Naive thymus-derived CD4-positive, alpha-beta T cell (primary cell): ENCODE measurements at regions of chr11 and their contacts with region 1.

Region 1: GRCh38 chr11:134275534-134276395 is at the start of gene GLB1L3:
- DNase-seq: peak; percentile 58 to 81 (median 79)
- ATAC-seq: peak; percentile 94
- H3K4me3 ChIP-seq: peak within 1 kb of the TSS; percentile 93
- H3K4me3 Mint-ChIP-seq: peak within 1 kb of the TSS; percentile 90 to 99 (median 95)
- H3K27ac ChIP-seq: peak within 1 kb of the TSS; percentile 69
- H3K27ac Mint-ChIP-seq: peak within 1 kb of the TSS; percentile 66 to 94 (median 92)
- H3K4me1 ChIP-seq: peaks cover 21 to 31% of the 10 kb centered on the region in 2 donors
- H3K4me1 Mint-ChIP-seq: peaks cover 26 to 54% (median 50%) of the 10 kb centered on the region in 7 donors
- H3K27me3 ChIP-seq: no peaks in the 10 kb centered on the region
- H3K27me3 Mint-ChIP-seq: peaks cover 0 to 11% (median 4%) of the 10 kb centered on the region in 5 donors
- total RNA-seq, gene GLB1L3: 1.0 to 11.4 (median 2.5) TPM

Region 2: DNA sequence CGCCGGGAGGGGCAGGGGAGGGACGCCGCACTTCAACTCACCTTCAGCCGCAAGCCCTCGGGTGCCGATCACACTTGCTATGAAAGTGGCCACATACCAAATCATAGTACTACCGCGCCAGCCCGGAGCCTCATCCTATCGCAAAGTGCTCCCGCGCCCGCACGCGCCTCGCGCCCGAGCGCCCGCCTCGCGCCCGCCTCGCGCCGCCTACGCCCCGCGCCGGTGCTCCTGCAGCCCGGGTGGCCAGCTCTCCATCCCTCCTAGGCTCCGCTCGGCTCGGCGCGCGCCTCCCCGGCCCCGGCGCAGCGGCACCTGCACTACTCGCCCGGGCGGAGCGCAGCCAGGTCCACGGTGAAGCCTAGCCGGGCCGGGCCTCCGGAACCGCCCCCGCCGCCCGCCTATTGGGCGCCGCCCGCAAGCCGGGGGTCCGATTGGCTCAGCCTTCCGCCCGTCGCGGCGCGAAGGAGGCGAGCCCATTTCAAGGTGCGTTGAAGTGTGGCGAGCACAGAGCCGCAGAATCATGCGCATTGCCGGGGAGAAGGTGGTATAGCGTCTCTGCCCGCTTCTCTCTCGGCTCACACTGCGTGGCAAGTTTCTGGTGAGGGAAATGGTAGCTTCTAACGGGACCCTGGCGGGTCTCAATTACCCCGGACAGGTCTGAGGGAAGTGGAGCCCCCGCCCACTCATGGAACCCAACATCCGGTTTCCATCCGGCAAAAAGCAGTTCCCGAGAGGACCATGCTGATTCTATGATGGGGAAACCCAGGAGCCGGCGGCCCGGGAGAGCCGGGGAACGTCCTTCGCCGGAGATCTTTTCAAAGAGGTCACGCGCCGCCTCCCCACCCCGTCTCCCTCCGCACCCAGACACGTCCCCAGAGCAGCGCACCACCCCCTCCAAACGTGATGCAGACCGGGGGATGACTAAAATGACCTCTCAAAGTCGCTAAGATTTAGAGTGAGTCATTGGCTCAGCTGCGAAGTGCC is 318.8 kb before region 1 on chr11 and contains the start of gene IGSF9B:
- CTCF ChIA-PET with region 1: no interaction called
- POLR2A ChIA-PET with region 1: interaction called, 3 read pairs
- intact Hi-C with region 1: loop called in 1 of 2 experiments (anchors 5 kb)
- DNase-seq: peak; percentile 87 to 97 (median 92)
- ATAC-seq: peak; percentile 97
- H3K4me3 ChIP-seq: peak within 1 kb of the TSS; percentile 99
- H3K4me3 Mint-ChIP-seq: peak within 1 kb of the TSS; percentile 89 to 96 (median 92)
- H3K27ac ChIP-seq: peak within 1 kb of the TSS; percentile 75
- H3K27ac Mint-ChIP-seq: peak within 1 kb of the TSS; percentile 48 to 91 (median 88)
- H3K4me1 ChIP-seq: peaks cover 11 to 27% of the 10 kb centered on the region in 2 donors
- H3K4me1 Mint-ChIP-seq: peaks cover 29 to 52% (median 43%) of the 10 kb centered on the region in 7 donors
- H3K27me3 ChIP-seq: no peaks in the 10 kb centered on the region
- H3K27me3 Mint-ChIP-seq: peaks cover 7 to 24% (median 16%) of the 10 kb centered on the region in 5 donors
- total RNA-seq, gene IGSF9B: 17.6 to 155 (median 24.1) TPM

Region 3: DNA sequence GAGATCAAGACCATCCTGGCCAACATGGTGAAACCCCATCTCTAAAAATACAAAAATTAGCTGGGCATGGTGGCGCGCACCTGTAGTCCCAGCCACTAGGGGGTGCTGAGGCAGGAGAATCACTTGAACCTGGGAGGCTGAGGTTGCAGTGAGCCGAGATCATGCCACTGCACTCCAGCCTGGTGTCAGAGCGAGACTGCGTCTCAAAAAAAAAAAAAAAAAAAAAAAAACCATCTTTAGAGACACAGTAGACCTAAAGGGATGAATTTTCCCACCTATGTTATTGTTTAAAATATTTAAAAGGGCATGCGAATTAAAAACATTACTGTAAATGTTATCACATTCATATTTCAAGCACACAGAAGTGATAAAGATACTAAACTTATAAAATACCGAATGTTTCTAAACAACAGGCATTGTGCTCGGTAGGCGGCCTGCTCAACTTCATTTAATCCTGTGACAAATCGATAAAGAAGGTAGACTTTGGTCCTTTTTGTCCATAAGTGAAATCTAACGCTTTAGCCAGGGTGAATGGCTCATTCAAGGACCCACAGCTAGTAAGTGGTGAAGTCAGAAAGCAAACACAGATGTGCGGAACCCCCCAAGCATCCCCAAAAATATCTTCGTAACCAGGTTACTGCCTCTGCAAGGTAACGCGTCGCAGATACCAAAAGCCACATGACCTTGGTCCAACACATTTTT is 68.1 kb before region 1 on chr11:
- CTCF ChIA-PET with region 1: interaction called, 4 read pairs
- POLR2A ChIA-PET with region 1: no interaction called
- intact Hi-C with region 1: loop called in 1 of 2 experiments (anchors 1 kb)
- DNase-seq: peak; percentile 36 to 67 (median 62)
- ATAC-seq: no peak
- H3K4me3 ChIP-seq: no peak overlapping the region
- H3K4me3 Mint-ChIP-seq: peak overlapping the region in 1 of 10 donors; percentile 34
- H3K27ac ChIP-seq: no peak overlapping the region
- H3K27ac Mint-ChIP-seq: no peak overlapping the region
- H3K4me1 ChIP-seq: no peaks in the 10 kb centered on the region
- H3K4me1 Mint-ChIP-seq: peaks cover 2 to 14% (median 7%) of the 10 kb centered on the region in 7 donors
- H3K27me3 ChIP-seq: no peaks in the 10 kb centered on the region
- H3K27me3 Mint-ChIP-seq: no peaks in the 10 kb centered on the region

Region 4: DNA sequence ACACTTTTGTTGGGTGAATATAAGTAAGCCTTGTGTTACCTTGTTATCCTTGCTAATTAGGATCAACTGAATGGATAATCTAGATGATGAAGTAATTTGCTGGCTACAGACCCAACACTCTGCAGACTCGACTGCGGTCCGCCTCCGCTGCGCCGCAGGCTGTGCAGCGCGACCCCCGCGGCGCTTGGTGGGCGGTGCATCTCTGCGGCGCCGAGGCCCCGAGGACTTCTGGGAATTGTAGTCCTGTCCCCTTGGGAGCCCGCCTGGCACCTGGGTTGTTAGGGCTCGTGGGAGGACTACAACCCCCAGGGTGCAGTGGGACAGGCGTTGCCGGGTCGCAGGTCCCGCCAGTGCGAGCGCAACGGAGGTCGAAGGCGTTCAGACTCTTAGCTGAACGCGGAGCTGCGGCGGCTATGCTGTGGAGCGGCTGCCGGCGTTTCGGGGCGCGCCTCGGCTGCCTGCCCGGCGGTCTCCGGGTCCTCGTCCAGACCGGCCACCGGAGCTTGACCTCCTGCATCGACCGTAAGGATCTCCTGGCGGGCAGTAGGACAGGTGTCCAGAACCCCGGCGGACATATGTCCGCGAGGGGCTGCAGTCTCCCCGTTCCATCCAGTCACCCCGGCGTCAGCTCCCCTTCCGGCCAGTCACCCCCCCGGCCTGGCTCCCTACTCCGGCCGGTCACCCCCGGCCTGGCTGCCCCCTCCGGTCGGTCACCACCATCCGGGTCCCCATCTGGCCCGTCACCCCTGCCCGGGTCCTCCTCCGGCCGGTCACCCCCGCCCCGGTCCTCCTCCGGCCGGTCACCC is 22.4 kb before region 1 on chr11 and contains the starts of genes ACAD8 and THYN1:
- CTCF ChIA-PET with region 1: interaction called, 7 read pairs
- POLR2A ChIA-PET with region 1: interaction called, 22 read pairs
- intact Hi-C with region 1: loop called (anchors 1 kb)
- DNase-seq: peak; percentile 82 to 98 (median 95)
- ATAC-seq: peak; percentile 100
- H3K4me3 ChIP-seq: peak within 1 kb of the TSS; percentile 89
- H3K4me3 Mint-ChIP-seq: peak within 1 kb of the TSS; percentile 79 to 99 (median 94)
- H3K27ac ChIP-seq: peak within 1 kb of the TSS; percentile 73
- H3K27ac Mint-ChIP-seq: peak within 1 kb of the TSS; percentile 75 to 92 (median 88)
- H3K4me1 ChIP-seq: peaks cover 16 to 18% of the 10 kb centered on the region in 2 donors
- H3K4me1 Mint-ChIP-seq: peaks cover 24 to 47% (median 40%) of the 10 kb centered on the region in 7 donors
- H3K27me3 ChIP-seq: no peaks in the 10 kb centered on the region
- H3K27me3 Mint-ChIP-seq: no peaks in the 10 kb centered on the region
- total RNA-seq, gene ACAD8: 18.5 to 40.2 (median 26.1) TPM
- total RNA-seq, gene THYN1: 34.4 to 67.7 (median 62.5) TPM

Region 5: DNA sequence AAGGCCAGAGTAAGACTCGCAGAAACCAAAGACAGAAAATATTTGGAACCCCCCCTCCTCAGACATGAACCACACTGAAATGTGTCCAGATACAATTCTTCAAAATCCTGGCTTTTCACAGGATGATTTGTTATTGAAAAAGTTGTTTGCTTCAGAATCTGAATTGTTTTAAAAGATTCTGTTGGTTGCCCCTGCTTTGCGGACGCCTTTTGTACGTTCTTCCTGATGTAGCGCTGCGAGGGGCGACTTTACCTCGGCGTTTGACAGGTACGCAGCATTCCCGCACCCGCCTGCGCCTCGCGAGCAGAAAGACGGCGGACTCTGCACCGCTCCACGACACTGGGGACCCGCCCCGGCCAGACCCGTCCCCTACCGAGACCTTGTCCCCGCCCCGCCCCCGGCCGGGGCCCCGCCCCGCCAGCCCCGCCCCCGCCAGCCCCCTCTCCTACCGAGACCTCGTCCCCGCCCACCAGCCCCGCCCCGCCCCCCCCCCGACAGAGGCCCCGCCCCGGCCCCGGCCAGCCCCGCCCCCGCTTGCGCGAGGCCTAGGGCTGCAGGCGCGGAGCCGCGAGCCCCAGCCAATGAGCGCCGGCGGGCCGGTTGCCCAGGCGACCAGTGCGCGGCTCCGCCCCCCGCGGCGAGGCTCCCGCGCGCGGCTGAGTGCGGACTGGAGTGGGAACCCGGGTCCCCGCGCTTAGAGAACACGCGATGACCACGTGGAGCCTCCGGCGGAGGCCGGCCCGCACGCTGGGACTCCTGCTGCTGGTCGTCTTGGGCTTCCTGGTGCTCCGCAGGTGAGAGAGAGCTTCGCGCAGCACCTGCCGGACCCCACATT is 55.8 kb after region 1 on chr11 and contains the start of gene GLB1L2:
- CTCF ChIA-PET with region 1: no interaction called
- POLR2A ChIA-PET with region 1: interaction called, 4 read pairs
- intact Hi-C with region 1: loop called (anchors 1 kb)
- DNase-seq: peak; percentile 68 to 88 (median 78)
- ATAC-seq: peak; percentile 96
- H3K4me3 ChIP-seq: peak within 1 kb of the TSS; percentile 66
- H3K4me3 Mint-ChIP-seq: peak within 1 kb of the TSS; percentile 84 to 94 (median 88)
- H3K27ac ChIP-seq: no peak within 1 kb of the TSS
- H3K27ac Mint-ChIP-seq: peak within 1 kb of the TSS in 7 of 9 donors; percentile 25 to 89 (median 66)
- H3K4me1 ChIP-seq: peaks cover 7 to 9% of the 10 kb centered on the region in 2 donors
- H3K4me1 Mint-ChIP-seq: peaks cover 3 to 19% (median 17%) of the 10 kb centered on the region in 7 donors
- H3K27me3 ChIP-seq: no peaks in the 10 kb centered on the region
- H3K27me3 Mint-ChIP-seq: peaks cover 5 to 60% (median 9%) of the 10 kb centered on the region in 5 donors
- total RNA-seq, gene GLB1L2: 0.34 to 2.4 (median 1.7) TPM

Region 6: GRCh38 chr11:134807997-134808396 is 532.2 kb after region 1 on chr11:
- CTCF ChIA-PET with region 1: no interaction called
- POLR2A ChIA-PET with region 1: no interaction called
- intact Hi-C with region 1: no loop called
- DNase-seq: no peak
- ATAC-seq: no peak
- H3K4me3 ChIP-seq: no peak overlapping the region
- H3K4me3 Mint-ChIP-seq: no peak overlapping the region
- H3K27ac ChIP-seq: no peak overlapping the region
- H3K27ac Mint-ChIP-seq: no peak overlapping the region
- H3K4me1 ChIP-seq: no peaks in the 10 kb centered on the region
- H3K4me1 Mint-ChIP-seq: no peaks in the 10 kb centered on the region
- H3K27me3 ChIP-seq: no peaks in the 10 kb centered on the region
- H3K27me3 Mint-ChIP-seq: peaks cover 0 to 51% (median 31%) of the 10 kb centered on the region in 5 donors